Sigmoid colon (tissue), 7 donors: ENCODE measurements at regions of chr7 and their contacts with region 1.

Region 1: GRCh38 chr7:150778738-150779301 is 21.3 kb downstream of the TMEM176B start:
- DNase-seq: peak; percentile 90
- H3K4me3 ChIP-seq: no peak overlapping the region
- H3K27ac ChIP-seq: no peak overlapping the region
- H3K4me1 ChIP-seq: peaks cover 0 to 18% (median 8%) of the 10 kb centered on the region in 4 donors
- H3K27me3 ChIP-seq: no peaks in the 10 kb centered on the region
- CTCF ChIP-seq: peak; percentile 69 to 90 (median 85)
- EP300 ChIP-seq: no peak
- POLR2A ChIP-seq: no peak

Region 2: GRCh38 chr7:150876817-150877526 is 98.2 kb after region 1 on chr7:
- intact Hi-C with region 1: loop called (anchors 2 kb)
- DNase-seq: peak; percentile 78
- H3K4me3 ChIP-seq: no peak overlapping the region
- H3K27ac ChIP-seq: peak overlapping the region in 2 of 4 donors; percentile 28 to 38
- H3K4me1 ChIP-seq: peaks cover 0 to 14% (median 10%) of the 10 kb centered on the region in 4 donors
- H3K27me3 ChIP-seq: no peaks in the 10 kb centered on the region
- CTCF ChIP-seq: peak in 2 of 4 experiments; percentile 35 to 38
- EP300 ChIP-seq: no peak
- POLR2A ChIP-seq: no peak

Region 3: GRCh38 chr7:150988230-150989226 is 209.7 kb after region 1 on chr7:
- intact Hi-C with region 1: loop called (anchors 2 kb)
- DNase-seq: no peak
- H3K4me3 ChIP-seq: no peak overlapping the region
- H3K27ac ChIP-seq: peak overlapping the region; percentile 12 to 41 (median 30)
- H3K4me1 ChIP-seq: peaks cover 0 to 25% (median 19%) of the 10 kb centered on the region in 4 donors
- H3K27me3 ChIP-seq: no peaks in the 10 kb centered on the region
- CTCF ChIP-seq: peak; percentile 91 to 98 (median 97)
- EP300 ChIP-seq: no peak
- POLR2A ChIP-seq: no peak

Region 4: GRCh38 chr7:151008511-151009323 is 229.9 kb after region 1 on chr7:
- intact Hi-C with region 1: loop called (anchors 5 kb)
- DNase-seq: no peak
- H3K4me3 ChIP-seq: peak overlapping the region in 2 of 4 donors; percentile 17 to 19
- H3K27ac ChIP-seq: no peak overlapping the region
- H3K4me1 ChIP-seq: peaks cover 0 to 20% (median 9%) of the 10 kb centered on the region in 4 donors
- H3K27me3 ChIP-seq: peaks cover 8 to 47% (median 35%) of the 10 kb centered on the region in 3 donors
- CTCF ChIP-seq: peak in 3 of 4 experiments; percentile 32 to 62 (median 33)
- EP300 ChIP-seq: no peak
- POLR2A ChIP-seq: no peak